HepG2 (cell line): ENCODE measurements at regions of chr3 and their contacts with region 1.

Region 1: DNA sequence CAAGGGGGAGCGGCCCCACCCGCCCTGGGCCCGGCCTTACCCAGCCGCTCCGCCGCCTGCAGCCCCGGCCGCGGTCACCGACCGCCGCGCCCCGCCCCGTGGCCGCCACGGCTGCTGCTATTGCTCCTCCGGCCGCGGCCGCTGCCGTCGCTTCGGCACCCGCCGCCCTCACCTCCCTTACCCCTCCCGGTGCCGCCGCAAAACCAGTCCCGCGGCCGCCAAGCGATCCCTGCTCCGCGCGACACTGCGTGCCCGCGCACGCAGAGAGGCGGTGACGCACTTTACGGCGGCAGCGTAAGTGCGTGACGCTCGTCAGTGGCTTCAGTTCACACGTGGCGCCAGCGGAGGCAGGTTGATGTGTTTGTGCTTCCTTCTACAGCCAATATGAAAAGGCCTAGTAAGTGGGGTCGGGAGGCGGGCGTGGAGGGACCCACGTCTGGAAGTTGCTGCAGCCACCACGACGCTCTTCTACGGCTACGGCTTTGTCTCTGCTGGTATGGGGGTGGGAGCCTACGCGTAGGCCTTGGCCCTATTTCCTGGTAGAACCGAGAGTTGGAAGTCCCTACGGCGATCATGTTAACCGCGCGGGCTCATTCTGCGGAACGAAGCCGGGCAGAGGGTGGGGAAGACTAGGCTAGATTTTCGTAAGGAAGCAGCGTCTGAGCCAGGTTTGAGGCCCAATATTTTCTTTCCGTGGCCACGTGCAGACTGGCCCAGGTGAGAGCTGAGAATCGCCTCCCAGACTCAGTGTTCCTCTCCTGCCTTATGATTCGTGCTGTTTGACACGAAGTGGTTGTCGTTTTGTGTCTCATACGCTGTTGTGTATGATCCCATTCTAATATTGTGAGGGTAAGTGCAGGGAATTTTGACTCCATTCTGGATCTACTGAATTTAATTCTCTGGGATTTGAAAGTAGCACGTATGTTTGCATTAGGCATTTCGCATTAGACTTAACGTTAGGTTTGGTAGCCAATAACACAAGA is at the starts of genes GNL3 and PBRM1:
- DNase-seq: peak; percentile 91
- ATAC-seq: peak; percentile 77
- H3K4me3 ChIP-seq: peak within 1 kb of the TSS; percentile 79 to 96 (median 84)
- H3K27ac ChIP-seq: peak within 1 kb of the TSS; percentile 86
- H3K4me1 ChIP-seq: peaks cover 82% of the 10 kb centered on the region
- H3K27me3 ChIP-seq: no peaks in the 10 kb centered on the region; a peak in 1 of 5 replicates
- CTCF ChIP-seq: peak; percentile 27
- EP300 ChIP-seq: 0 out of 4 replicates have a peak, but pooled peaks of 1 of the 2 experiments have one; percentile 4
- POLR2A ChIP-seq: peak; percentile 90 to 98
- RAD21 ChIP-seq: peak; percentile 27; the same call in 1 of the 2 replicates
- total RNA-seq, gene GNL3: 257 and 281 TPM in 2 replicates
- total RNA-seq, gene PBRM1: 33.2 and 47.0 TPM in 2 replicates

Region 2: GRCh38 chr3:52455283-52456168 is 230.5 kb before region 1 on chr3 and contains the start of gene NISCH:
- CTCF ChIA-PET with region 1: no interaction called
- POLR2A ChIA-PET with region 1: no interaction called
- in situ Hi-C with region 1: loop called (anchors 10 kb)
- intact Hi-C with region 1: no loop called
- DNase-seq: peak; percentile 58
- ATAC-seq: peak; percentile 38
- H3K4me3 ChIP-seq: peak within 1 kb of the TSS; percentile 90 to 96 (median 92)
- H3K27ac ChIP-seq: peak within 1 kb of the TSS; percentile 63
- H3K4me1 ChIP-seq: peaks cover 64% of the 10 kb centered on the region
- H3K27me3 ChIP-seq: no peaks in the 10 kb centered on the region; a peak in 1 of 5 replicates
- CTCF ChIP-seq: peak; percentile 26; the same call in 1 of the 2 replicates
- EP300 ChIP-seq: peak in 1 of 2 experiments; percentile 64; a peak in 2 of 4 replicates
- POLR2A ChIP-seq: peak in 1 of 2 experiments; percentile 52; a peak in 1 of 4 replicates
- RAD21 ChIP-seq: no peak
- total RNA-seq, gene NISCH: 15.3 and 27.0 TPM in 2 replicates

Region 3: GRCh38 chr3:52471371-52472238 is 214.4 kb before region 1 on chr3:
- CTCF ChIA-PET with region 1: interaction called, 3 read pairs
- POLR2A ChIA-PET with region 1: no interaction called
- in situ Hi-C with region 1: no loop called
- intact Hi-C with region 1: loop called (anchors 1 kb)
- DNase-seq: no peak
- ATAC-seq: peak; percentile 88
- H3K4me3 ChIP-seq: no peak overlapping the region
- H3K27ac ChIP-seq: no peak overlapping the region
- H3K4me1 ChIP-seq: peaks cover 5% of the 10 kb centered on the region; the same call in 1 of the 2 replicates
- H3K27me3 ChIP-seq: no peaks in the 10 kb centered on the region
- CTCF ChIP-seq: peak; percentile 85
- EP300 ChIP-seq: no peak
- POLR2A ChIP-seq: no peak
- RAD21 ChIP-seq: peak; percentile 72

Region 4: GRCh38 chr3:52552089-52552488 is 133.9 kb before region 1 on chr3:
- CTCF ChIA-PET with region 1: no interaction called
- POLR2A ChIA-PET with region 1: no interaction called
- in situ Hi-C with region 1: no loop called
- intact Hi-C with region 1: no loop called
- DNase-seq: no peak
- ATAC-seq: no peak
- H3K4me3 ChIP-seq: no peak overlapping the region
- H3K27ac ChIP-seq: no peak overlapping the region
- H3K4me1 ChIP-seq: no peaks in the 10 kb centered on the region
- H3K27me3 ChIP-seq: no peaks in the 10 kb centered on the region
- CTCF ChIP-seq: no peak
- EP300 ChIP-seq: no peak
- POLR2A ChIP-seq: no peak
- RAD21 ChIP-seq: no peak

Region 5: DNA sequence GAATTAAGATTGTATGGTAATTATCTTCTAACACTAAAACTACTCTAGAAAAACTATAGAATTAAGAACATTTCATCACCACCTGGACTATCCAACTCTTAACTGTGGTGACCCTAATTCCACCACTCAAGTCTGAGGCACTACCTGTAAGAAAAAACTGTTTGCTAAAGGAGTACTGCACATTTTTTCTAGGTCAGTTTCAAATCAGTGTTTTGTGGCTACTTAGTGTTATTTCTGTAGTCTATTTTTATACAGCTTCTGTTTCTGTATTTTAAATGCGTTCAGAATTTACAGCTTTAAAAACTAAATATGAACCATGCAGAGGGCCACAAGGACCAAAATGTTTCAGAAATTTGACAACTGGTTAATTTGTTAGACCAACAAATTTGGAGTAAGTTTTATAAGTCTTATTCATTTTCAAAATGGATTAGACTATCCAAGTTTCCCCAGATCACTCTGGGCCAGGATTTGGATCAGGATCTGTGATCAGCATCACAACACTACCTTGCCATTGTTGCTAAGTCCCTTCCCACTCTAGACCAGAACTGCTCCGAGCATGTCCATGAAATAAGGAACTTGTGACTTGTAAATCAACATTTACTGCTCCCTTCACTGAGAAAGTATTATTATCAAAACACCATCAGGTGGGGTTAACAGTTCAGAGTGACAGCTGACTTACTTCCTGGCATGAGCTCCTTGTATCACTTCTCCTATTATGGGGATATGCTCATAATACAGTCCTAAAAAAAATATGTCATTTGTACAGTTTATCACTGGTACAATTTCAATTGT is 11.0 kb after region 1 on chr3:
- CTCF ChIA-PET with region 1: no interaction called
- POLR2A ChIA-PET with region 1: interaction called, 118 read pairs
- in situ Hi-C with region 1: no loop called
- intact Hi-C with region 1: no loop called
- DNase-seq: no peak
- ATAC-seq: no peak
- H3K4me3 ChIP-seq: no peak overlapping the region
- H3K27ac ChIP-seq: no peak overlapping the region
- H3K4me1 ChIP-seq: peaks cover 7% of the 10 kb centered on the region
- H3K27me3 ChIP-seq: no peaks in the 10 kb centered on the region
- CTCF ChIP-seq: no peak
- EP300 ChIP-seq: no peak
- POLR2A ChIP-seq: no peak
- RAD21 ChIP-seq: no peak

Region 6: DNA sequence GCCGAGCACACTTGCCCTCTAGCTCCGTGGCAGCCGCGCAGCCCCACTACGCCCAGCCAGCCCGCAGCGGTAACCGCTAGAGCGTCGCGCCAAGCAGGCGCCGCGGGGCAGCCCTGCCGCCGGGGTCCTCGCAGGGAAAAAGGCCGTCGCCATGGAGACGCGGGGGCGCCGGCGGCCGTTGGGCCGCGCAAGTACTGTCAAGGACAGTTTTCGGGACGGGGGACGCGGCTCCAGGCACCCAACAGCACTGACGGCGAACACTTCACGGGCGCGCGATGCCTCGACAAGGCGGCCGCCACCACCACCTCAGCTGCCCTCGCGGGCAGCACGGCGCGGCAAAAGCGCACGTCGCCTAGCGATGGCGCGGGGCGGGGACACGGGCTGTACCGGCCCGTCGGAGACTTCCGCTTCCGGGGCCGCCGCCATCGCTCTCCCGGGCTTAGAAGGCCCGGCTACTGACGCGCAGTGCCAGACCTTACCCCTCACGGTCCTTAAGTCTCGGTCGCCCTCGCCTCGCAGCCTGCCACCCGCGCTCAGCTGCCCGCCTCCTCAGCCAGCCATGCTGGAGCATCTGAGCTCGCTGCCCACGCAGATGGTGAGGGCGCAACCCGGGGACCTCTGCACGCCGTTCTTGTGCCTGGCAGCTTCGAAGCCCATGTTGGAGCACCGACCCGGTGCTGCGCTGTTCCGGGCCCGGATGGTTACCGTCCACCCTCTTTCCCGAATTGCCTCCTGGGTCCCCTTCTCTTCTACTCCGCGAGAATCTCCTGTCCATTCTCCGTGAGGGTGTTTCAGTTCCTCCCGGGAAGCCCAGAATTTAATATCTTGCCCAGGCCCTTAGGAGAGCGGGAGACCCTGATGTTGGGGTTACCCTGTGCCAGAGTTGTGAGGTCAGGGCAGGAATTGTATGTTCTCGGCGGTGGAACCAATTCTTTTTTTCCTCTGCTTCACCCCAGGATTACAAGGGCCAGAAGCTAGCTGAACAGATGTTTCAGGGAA is 20.0 kb after region 1 on chr3 and contains the starts of genes GLT8D1 and SPCS1:
- CTCF ChIA-PET with region 1: no interaction called
- POLR2A ChIA-PET with region 1: interaction called, 118 read pairs
- in situ Hi-C with region 1: no loop called
- intact Hi-C with region 1: no loop called
- DNase-seq: peak; percentile 73
- ATAC-seq: peak; percentile 88
- H3K4me3 ChIP-seq: peak within 1 kb of the TSS; percentile 90 to 97 (median 95)
- H3K27ac ChIP-seq: peak within 1 kb of the TSS; percentile 90
- H3K4me1 ChIP-seq: peaks cover 45% of the 10 kb centered on the region
- H3K27me3 ChIP-seq: no peaks in the 10 kb centered on the region; a peak in 1 of 5 replicates
- CTCF ChIP-seq: no peak; the same call in 1 of the 2 replicates
- EP300 ChIP-seq: 0 out of 4 replicates have a peak, but pooled peaks of 1 of the 2 experiments have one; percentile 14
- POLR2A ChIP-seq: peak; percentile 72 to 87
- RAD21 ChIP-seq: peak; percentile 8; the same call in 1 of the 2 replicates
- total RNA-seq, gene GLT8D1: 65.1 and 110 TPM in 2 replicates
- total RNA-seq, gene SPCS1: 100 and 120 TPM in 2 replicates